A549 (cell line): ENCODE measurements at regions of chr2 and their contacts with region 1.

Region 1: GRCh38 chr2:46315103-46315890 is 18.1 kb downstream of the EPAS1 start:
- DNase-seq: peak; percentile 95 to 98
- ATAC-seq: peak; percentile 90 to 94
- H3K4me3 ChIP-seq: peak overlapping the region; percentile 18; the same call in 2 of the 3 replicates
- H3K27ac ChIP-seq: peak overlapping the region; percentile 85 to 92
- H3K4me1 ChIP-seq: peaks cover 95% of the 10 kb centered on the region
- CTCF ChIP-seq: no peak
- EP300 ChIP-seq: peak; percentile 87 to 92; a peak in 3 of 5 replicates
- POLR2A ChIP-seq: 0 out of 2 replicates have a peak, but pooled peaks have one; percentile 3
- RAD21 ChIP-seq: peak; percentile 23 to 68; a peak in 4 of 5 replicates

Region 2: GRCh38 chr2:45889053-45889452 is 426.2 kb before region 1 on chr2:
- CTCF ChIA-PET with region 1: no interaction called
- POLR2A ChIA-PET with region 1: no interaction called
- DNase-seq: peak in 1 of 2 experiments; percentile 18
- ATAC-seq: peak; percentile 77 to 83; a peak in 5 of 6 replicates
- H3K4me3 ChIP-seq: no peak overlapping the region
- H3K27ac ChIP-seq: no peak overlapping the region
- H3K4me1 ChIP-seq: no peaks in the 10 kb centered on the region
- CTCF ChIP-seq: no peak
- EP300 ChIP-seq: no peak
- POLR2A ChIP-seq: no peak
- RAD21 ChIP-seq: no peak

Region 3: GRCh38 chr2:46329803-46330775 is 14.8 kb after region 1 on chr2:
- CTCF ChIA-PET with region 1: interaction called, 45 read pairs
- POLR2A ChIA-PET with region 1: interaction called, 3 read pairs
- DNase-seq: peak; percentile 66 to 86
- ATAC-seq: peak; percentile 66 to 76
- H3K4me3 ChIP-seq: peak overlapping the region; percentile 12; the same call in 1 of the 3 replicates
- H3K27ac ChIP-seq: peak overlapping the region; percentile 88 to 89
- H3K4me1 ChIP-seq: peaks cover 99% of the 10 kb centered on the region
- CTCF ChIP-seq: no peak
- EP300 ChIP-seq: peak; percentile 71 to 81; a peak in 3 of 5 replicates
- POLR2A ChIP-seq: no peak
- RAD21 ChIP-seq: peak in 1 of 2 experiments; percentile 42; a peak in 1 of 5 replicates